MCF 10A (cell line): ENCODE measurements at regions of chr7 and their contacts with region 1.

Region 1: GRCh38 chr7:55415173-55415778 is 50.1 kb downstream of the LANCL2 start:
- DNase-seq: peak; percentile 81
- H3K4me3 Mint-ChIP-seq: no peak overlapping the region
- H3K27ac Mint-ChIP-seq: no peak overlapping the region
- H3K4me1 Mint-ChIP-seq: no peaks in the 10 kb centered on the region
- H3K27me3 Mint-ChIP-seq: no peaks in the 10 kb centered on the region
- CTCF ChIP-seq: peak; percentile 77

Region 2: DNA sequence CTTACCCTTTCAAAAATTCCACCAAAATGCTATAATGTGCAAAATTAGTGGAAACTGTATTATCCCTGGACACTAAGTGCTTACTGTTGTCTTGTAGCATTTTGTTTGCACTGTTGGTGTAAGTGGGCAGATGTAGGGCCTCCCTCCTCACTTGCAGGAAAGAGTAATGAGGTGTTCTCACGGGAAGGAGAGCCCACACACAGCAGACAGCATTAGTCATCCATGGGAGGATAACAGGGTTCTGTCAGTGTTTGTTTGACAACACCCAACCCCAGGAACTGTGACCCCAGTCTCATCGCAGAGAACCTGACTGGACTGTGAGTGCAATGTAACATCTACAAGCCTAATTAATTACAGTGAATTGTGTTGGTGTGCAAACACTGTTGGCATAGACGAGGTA is 931.8 kb before region 1 on chr7:
- CTCF ChIA-PET with region 1: no interaction called
- POLR2A ChIA-PET with region 1: no interaction called
- intact Hi-C with region 1: no loop called
- DNase-seq: no peak
- H3K4me3 Mint-ChIP-seq: no peak overlapping the region
- H3K27ac Mint-ChIP-seq: no peak overlapping the region
- H3K4me1 Mint-ChIP-seq: no peaks in the 10 kb centered on the region
- H3K27me3 Mint-ChIP-seq: peaks cover 39% of the 10 kb centered on the region
- CTCF ChIP-seq: no peak

Region 3: DNA sequence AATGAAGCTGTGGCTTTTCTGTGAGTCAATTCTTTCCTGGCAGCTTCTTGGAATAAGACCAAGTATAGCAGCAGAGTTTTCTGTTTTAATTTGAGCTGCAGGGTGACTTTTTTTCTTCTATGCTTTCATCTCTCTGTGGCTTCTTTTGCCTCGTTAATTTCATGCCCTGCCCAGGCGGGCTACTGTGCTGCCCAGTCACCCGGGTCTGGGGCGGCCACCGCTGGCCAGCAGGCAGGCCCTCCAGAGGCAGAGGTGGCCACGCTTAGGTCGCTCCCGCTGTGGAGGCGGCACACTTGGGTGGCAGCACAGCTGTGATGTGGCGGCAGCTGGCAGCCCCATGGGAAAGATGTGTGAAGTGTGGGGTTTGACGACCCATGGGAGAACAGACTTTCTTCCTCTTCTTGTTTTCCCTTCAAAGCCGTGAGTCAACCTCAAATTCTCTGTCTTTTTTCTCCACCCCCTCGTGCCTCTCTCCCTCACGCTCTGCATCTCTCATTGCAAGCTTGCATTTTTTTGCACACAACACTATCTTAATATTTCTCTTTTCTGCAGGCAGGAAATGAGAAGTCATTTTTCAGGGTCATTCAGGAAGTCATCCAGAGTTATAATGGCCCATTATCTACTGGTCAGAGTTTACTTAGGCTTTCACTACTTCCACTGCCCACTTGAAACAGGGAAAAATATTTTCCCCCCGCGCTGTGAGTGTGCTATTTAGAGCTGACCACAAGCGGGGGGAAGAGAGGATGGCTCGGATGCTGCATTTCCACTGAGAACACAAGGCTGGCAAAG is 328.7 kb before region 1 on chr7:
- CTCF ChIA-PET with region 1: no interaction called
- POLR2A ChIA-PET with region 1: no interaction called
- intact Hi-C with region 1: no loop called
- DNase-seq: peak; percentile 78
- H3K4me3 Mint-ChIP-seq: peak overlapping the region; percentile 68
- H3K27ac Mint-ChIP-seq: peak overlapping the region; percentile 54
- H3K4me1 Mint-ChIP-seq: peaks cover 58% of the 10 kb centered on the region
- H3K27me3 Mint-ChIP-seq: no peaks in the 10 kb centered on the region
- CTCF ChIP-seq: no peak

Region 4: GRCh38 chr7:55374213-55374612 is 41.1 kb before region 1 on chr7:
- CTCF ChIA-PET with region 1: interaction called, 24 read pairs
- POLR2A ChIA-PET with region 1: no interaction called
- intact Hi-C with region 1: no loop called
- DNase-seq: no peak
- H3K4me3 Mint-ChIP-seq: no peak overlapping the region
- H3K27ac Mint-ChIP-seq: no peak overlapping the region
- H3K4me1 Mint-ChIP-seq: no peaks in the 10 kb centered on the region
- H3K27me3 Mint-ChIP-seq: no peaks in the 10 kb centered on the region
- CTCF ChIP-seq: no peak